GM10248 (cell line): ENCODE measurements at regions of chr9 and their contacts with region 1.

Region 1: GRCh38 chr9:99680191-99680590 is 141.5 kb upstream of the NR4A3 start:
- DNase-seq: no peak
- CTCF ChIP-seq: no peak

Region 2: DNA sequence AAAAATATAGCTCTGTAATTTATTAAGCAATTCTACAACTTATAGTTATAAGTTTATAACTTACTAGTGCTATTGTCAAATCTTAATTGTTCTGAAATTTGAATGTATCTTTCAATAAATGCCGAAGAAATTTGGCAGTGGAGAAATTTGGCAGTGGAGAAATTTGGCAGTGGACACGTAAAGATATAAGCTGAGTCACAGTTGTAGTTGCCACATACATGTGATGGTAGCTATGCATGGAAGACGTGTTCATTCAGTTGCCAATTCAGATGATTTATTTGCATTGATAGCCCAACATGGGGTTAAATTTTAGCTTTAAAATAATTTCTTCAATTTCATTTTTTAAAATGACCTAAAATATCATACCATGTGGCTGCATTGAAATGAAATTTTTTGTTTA is 13.7 kb after region 1 on chr9:
- CTCF ChIA-PET with region 1: interaction called, 12 read pairs
- POLR2A ChIA-PET with region 1: no interaction called
- DNase-seq: no peak
- CTCF ChIP-seq: no peak